Activated naive CD4-positive, alpha-beta T cell treated with anti-CD3 and anti-CD28 coated beads for 36 hours (primary cell): ENCODE measurements at regions of chr9 and their contacts with region 1.

Region 1: GRCh38 chr9:116572095-116572748 is 114.9 kb upstream of the TRIM32 start:
- DNase-seq: peak; percentile 45
- H3K4me3 Mint-ChIP-seq: no peak overlapping the region
- H3K27ac Mint-ChIP-seq: no peak overlapping the region
- H3K4me1 Mint-ChIP-seq: no peaks in the 10 kb centered on the region
- H3K27me3 Mint-ChIP-seq: no peaks in the 10 kb centered on the region

Region 2: DNA sequence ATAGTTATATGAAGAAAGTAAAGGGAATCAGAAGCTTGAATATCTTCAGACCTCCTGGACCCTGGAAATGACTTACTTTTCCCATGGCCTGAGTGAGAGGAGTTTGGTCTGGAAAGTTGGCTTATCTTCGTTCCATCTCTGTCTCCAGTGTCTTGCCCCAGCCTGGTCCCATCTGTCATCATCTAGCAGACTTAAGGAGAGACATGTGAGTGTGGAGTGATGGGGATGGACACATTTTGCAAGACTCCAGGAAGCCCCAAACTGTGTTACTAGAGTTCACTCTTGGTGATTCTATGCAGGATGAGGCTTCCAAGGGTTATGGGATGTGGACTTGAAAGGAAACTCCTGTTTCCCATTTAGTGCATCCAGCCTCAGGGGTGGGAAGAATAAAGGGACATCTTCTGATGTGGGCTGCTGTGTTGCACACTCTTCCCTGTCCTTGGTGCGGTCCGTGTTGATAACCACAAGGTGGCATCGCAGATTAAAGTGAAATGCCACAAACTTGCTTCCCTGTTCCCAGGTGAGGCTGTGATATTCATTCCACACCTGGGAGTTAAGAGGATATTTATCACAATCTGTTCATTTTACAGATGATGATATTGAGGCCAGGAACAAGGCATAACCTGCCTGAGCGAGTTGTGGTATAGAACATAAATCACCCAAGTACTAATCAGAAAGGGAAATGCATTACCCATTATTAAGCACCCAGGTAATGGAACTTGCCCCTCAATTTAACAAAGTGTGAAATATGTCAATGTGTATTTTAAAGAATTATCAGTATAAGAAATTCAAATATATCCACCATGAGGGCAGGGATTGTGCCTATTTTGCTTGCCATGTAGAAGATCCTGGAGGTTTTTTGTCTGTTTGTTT is 688.5 kb before region 1 on chr9:
- CTCF ChIA-PET with region 1: no interaction called
- intact Hi-C with region 1: loop called (anchors 10 kb)
- DNase-seq: peak; percentile 5
- H3K4me3 Mint-ChIP-seq: no peak overlapping the region
- H3K27ac Mint-ChIP-seq: no peak overlapping the region
- H3K4me1 Mint-ChIP-seq: no peaks in the 10 kb centered on the region
- H3K27me3 Mint-ChIP-seq: peaks cover 4% of the 10 kb centered on the region

Region 3: DNA sequence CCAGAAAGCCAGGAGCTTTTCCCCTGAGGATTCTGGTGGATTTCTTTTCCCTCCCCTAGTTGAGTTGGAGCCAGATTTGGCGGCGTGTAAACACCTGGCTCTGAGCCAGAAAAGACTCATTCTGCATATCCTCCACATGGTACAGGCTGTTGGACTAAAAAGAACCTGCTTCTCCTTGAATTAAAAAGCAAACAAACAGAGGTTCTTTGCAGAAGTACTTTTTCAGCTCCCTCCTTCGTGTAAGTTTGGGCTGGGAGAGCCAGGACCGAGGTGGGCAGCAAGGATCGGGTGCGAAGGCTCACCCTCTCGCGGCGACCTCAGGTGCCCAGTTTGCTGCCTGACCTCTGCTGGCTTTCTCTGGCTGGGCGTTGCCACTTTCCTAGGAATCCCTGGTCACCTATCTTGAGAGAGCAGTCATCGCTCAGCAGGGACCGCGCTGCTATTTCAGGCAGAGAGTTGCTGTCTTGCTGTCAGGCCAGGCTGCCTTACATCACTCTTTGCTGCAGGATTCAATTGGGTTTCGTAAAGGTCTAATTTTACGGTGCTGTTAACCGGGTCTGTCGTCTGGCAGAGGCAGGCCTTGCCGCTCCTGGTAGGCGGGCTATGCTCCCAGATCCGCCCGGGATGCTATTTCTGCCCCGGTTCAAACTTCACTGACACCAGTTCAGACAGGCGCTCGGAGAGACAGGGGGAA is 415.5 kb before region 1 on chr9:
- CTCF ChIA-PET with region 1: no interaction called
- intact Hi-C with region 1: loop called (anchors 5 kb)
- DNase-seq: peak; percentile 4
- H3K4me3 Mint-ChIP-seq: no peak overlapping the region
- H3K27ac Mint-ChIP-seq: no peak overlapping the region
- H3K4me1 Mint-ChIP-seq: peaks cover 15% of the 10 kb centered on the region
- H3K27me3 Mint-ChIP-seq: peaks cover 72% of the 10 kb centered on the region

Region 4: DNA sequence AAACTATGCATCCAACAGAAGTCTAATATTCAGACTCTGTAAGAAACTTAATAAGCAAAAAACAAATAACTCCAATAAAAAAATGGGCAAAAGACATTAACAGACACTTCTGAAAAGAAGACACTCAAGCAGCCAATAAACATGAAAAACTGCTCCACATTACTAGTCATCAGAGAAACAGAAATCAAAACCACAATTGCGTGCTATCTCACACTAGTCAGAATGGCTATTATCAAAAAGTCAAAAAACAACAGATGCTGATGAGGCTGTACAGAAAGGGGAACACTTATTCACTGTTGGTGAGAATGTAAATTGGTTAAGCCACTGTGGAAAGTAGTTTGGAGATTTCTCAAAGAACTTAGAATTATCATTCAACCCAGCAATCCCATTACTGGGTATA is 13.7 kb after region 1 on chr9:
- CTCF ChIA-PET with region 1: no interaction called
- intact Hi-C with region 1: no loop called
- DNase-seq: no peak
- H3K4me3 Mint-ChIP-seq: no peak overlapping the region
- H3K27ac Mint-ChIP-seq: no peak overlapping the region
- H3K4me1 Mint-ChIP-seq: no peaks in the 10 kb centered on the region
- H3K27me3 Mint-ChIP-seq: no peaks in the 10 kb centered on the region